T-cell (primary cell): ENCODE measurements at regions of chr1 and their contacts with region 1.

Region 1: GRCh38 chr1:151327223-151327902 is at the start of gene PI4KB:
- DNase-seq: peak; percentile 73 to 96 (median 87)
- ATAC-seq: peak; percentile 94 to 95 (median 95)
- H3K4me3 ChIP-seq: peak within 1 kb of the TSS; percentile 69 to 96
- H3K4me3 Mint-ChIP-seq: peak within 1 kb of the TSS; percentile 88 to 98 (median 96)
- H3K27ac ChIP-seq: peak within 1 kb of the TSS; percentile 90
- H3K27ac Mint-ChIP-seq: peak within 1 kb of the TSS; percentile 99
- H3K4me1 ChIP-seq: peaks cover 10 to 28% of the 10 kb centered on the region in 2 experiments
- H3K4me1 Mint-ChIP-seq: peaks cover 35 to 46% (median 46%) of the 10 kb centered on the region in 3 donors
- H3K27me3 ChIP-seq: no peaks in the 10 kb centered on the region
- H3K27me3 Mint-ChIP-seq: no peaks in the 10 kb centered on the region
- total RNA-seq, gene PI4KB: 64.9 to 96.9 (median 75.4) TPM

Region 2: DNA sequence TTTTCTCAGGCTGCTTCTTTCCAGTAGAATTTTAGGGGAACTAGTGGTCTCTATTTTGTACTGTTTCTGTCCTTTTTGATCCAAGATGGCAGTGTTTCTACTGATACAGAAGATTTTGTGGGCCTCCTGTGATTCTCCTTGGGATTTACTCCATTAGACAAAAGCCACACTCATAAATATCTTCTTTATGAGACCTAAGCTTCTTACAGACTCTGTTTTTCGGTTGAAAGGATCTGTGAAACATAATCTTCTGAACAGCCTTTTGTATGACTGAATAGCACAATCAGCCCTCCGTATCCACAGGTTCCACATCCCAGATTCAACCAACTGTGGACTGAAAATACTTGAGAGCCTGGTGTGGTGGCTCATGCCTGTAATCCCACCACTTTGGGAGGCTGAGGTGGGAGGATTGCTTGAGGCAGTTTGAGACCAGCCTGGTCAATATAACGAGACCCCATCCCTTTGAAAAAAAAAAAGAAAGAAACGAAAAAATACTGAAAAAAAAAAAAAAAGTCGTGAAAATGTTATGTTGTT is 83.6 kb before region 1 on chr1:
- CTCF ChIA-PET with region 1: interaction called in 1 of 2 experiments, 10 read pairs
- POLR2A ChIA-PET with region 1: no interaction called
- DNase-seq: no peak
- ATAC-seq: no peak
- H3K4me3 ChIP-seq: no peak overlapping the region
- H3K4me3 Mint-ChIP-seq: no peak overlapping the region
- H3K27ac ChIP-seq: no peak overlapping the region
- H3K27ac Mint-ChIP-seq: no peak overlapping the region
- H3K4me1 ChIP-seq: no peaks in the 10 kb centered on the region
- H3K4me1 Mint-ChIP-seq: no peaks in the 10 kb centered on the region
- H3K27me3 ChIP-seq: no peaks in the 10 kb centered on the region
- H3K27me3 Mint-ChIP-seq: no peaks in the 10 kb centered on the region

Region 3: DNA sequence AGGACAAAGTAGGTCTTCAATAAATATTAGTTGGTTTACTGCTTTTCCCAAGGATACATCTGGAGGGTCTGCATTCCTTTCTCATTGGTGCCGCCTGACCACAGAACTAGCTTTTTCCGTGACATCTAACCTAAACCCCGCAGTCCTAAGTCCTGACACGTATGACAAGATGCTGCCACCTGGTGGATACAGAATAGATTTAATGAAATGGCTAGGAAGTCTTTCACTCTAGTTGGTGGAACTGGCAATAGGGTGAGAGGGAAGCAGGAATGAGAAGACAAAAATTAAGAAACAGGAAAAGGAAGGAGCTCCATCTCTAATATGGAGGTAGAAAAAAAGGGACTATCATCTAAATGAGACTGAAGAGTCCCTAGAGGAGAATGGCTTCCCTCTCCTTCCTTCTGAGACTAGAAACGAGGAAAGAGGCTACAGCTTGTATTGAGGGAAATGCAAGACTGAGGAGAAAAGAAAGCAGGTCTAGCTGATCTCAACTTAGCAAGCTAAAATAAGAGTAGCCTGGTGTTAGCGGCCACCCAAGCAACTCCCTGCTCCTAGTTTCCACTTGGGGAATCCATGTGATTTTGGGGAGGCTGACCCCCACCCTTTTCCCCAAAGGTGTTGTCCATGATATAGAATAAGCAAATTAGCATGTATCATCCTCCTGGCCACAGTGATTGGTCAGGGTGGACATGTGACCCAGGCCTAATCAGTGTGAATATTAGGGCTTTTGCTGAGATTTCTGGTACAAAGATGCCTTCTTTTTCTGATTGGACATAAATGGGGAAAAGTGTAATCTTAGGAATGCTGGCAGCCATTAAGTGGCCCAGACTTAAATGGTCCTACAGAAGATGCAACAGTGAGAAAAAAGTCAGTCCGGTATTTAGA is 13.7 kb after region 1 on chr1:
- CTCF ChIA-PET with region 1: interaction called, 3 to 36 read pairs
- POLR2A ChIA-PET with region 1: interaction called, 3 to 9 read pairs
- DNase-seq: peak in 28 of 35 experiments; percentile 14 to 83 (median 32)
- ATAC-seq: peak; percentile 84 to 87 (median 86)
- H3K4me3 ChIP-seq: no peak overlapping the region
- H3K4me3 Mint-ChIP-seq: no peak overlapping the region
- H3K27ac ChIP-seq: peak overlapping the region; percentile 35
- H3K27ac Mint-ChIP-seq: peak overlapping the region; percentile 7 to 70
- H3K4me1 ChIP-seq: peaks cover 3 to 12% of the 10 kb centered on the region in 2 experiments
- H3K4me1 Mint-ChIP-seq: peaks cover 13 to 39% (median 24%) of the 10 kb centered on the region in 3 donors
- H3K27me3 ChIP-seq: no peaks in the 10 kb centered on the region
- H3K27me3 Mint-ChIP-seq: no peaks in the 10 kb centered on the region

Region 4: GRCh38 chr1:151346769-151347522 is 19.6 kb after region 1 on chr1 and contains the start of gene RFX5:
- CTCF ChIA-PET with region 1: interaction called in 1 of 2 experiments, 11 read pairs
- POLR2A ChIA-PET with region 1: interaction called in 1 of 2 experiments, 6 read pairs
- DNase-seq: peak; percentile 78 to 98 (median 95)
- ATAC-seq: peak; percentile 92 to 97 (median 97)
- H3K4me3 ChIP-seq: peak within 1 kb of the TSS; percentile 72 to 77
- H3K4me3 Mint-ChIP-seq: peak within 1 kb of the TSS; percentile 95 to 98 (median 96)
- H3K27ac ChIP-seq: peak within 1 kb of the TSS; percentile 99
- H3K27ac Mint-ChIP-seq: peak within 1 kb of the TSS; percentile 98 to 100
- H3K4me1 ChIP-seq: peaks cover 10 to 25% of the 10 kb centered on the region in 2 experiments
- H3K4me1 Mint-ChIP-seq: peaks cover 25 to 46% (median 36%) of the 10 kb centered on the region in 3 donors
- H3K27me3 ChIP-seq: no peaks in the 10 kb centered on the region
- H3K27me3 Mint-ChIP-seq: no peaks in the 10 kb centered on the region
- total RNA-seq, gene RFX5: 50.3 to 79.8 (median 70.2) TPM